ENCODE measurements at regions of chr5 and their contacts with region 1.

Region 1: DNA sequence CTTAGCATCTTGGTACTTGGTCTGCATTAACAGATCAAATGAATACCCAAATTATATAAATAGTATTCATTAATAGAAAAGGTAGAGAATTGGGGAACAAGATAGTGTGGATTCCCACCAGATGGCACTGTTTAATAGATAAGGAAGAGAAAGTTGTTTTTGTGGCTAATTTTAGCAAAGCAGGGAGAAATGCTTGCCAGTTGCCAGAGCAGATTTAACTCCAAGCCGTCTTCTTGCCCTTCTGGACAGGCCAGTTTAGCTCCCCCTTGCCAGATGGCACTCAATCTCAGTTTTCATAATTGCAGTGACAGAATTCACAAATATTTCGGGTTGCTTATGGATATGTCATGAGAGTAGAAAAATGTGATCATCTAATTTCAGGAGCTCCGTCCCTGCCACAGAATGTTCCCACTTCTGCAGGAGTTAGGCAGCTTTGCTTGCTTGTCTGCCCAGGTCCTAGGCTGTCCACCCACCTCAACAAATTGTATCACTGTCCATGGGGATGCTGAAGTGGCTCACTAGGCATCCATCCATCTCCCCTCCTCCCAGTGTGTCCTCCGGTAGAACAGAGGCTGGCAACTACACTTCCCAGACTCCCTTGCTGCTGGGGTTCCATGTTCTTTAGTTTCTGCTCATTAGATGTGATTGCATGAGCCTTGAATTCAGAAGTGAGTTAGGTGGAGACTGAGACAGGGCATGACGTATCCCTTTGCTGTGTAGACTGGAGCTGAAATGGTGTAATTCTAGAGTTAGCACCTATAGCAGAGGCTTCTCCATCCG is 11.8 kb upstream of the HEXB start:
- DNase-seq: no peak
- ATAC-seq: no peak
- H3K4me3 Mint-ChIP-seq: no peak overlapping the region
- H3K27ac Mint-ChIP-seq: no peak overlapping the region
- H3K4me1 Mint-ChIP-seq: no peaks in the 10 kb centered on the region
- H3K27me3 Mint-ChIP-seq: peaks cover 6% of the 10 kb centered on the region
- CTCF ChIP-seq: no peak

Region 2: DNA sequence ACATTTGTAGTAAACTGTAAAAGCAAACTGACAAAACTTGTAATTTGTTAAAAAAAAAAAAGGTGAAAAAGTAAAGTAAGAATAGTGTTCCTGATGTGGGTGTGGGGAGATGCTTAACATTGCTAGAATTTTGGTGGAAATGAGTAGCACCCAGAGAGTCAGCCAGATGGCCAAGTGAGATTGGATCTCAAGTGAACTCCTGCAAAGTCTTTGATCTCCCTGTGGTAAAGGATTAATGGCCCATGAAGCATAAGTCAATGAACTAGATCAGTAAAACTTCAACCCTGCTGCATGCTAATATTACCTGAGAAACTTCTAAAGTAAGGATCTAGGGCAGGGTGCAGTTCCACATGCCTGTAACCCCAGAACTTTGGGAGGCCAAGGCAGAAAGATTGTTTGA is 212.0 kb after region 1 on chr5:
- CTCF ChIA-PET with region 1: no interaction called
- POLR2A ChIA-PET with region 1: no interaction called
- intact Hi-C with region 1: no loop called
- DNase-seq: no peak
- ATAC-seq: no peak
- H3K4me3 Mint-ChIP-seq: no peak overlapping the region
- H3K27ac Mint-ChIP-seq: no peak overlapping the region
- H3K4me1 Mint-ChIP-seq: no peaks in the 10 kb centered on the region
- H3K27me3 Mint-ChIP-seq: no peaks in the 10 kb centered on the region
- CTCF ChIP-seq: no peak

Region 3: DNA sequence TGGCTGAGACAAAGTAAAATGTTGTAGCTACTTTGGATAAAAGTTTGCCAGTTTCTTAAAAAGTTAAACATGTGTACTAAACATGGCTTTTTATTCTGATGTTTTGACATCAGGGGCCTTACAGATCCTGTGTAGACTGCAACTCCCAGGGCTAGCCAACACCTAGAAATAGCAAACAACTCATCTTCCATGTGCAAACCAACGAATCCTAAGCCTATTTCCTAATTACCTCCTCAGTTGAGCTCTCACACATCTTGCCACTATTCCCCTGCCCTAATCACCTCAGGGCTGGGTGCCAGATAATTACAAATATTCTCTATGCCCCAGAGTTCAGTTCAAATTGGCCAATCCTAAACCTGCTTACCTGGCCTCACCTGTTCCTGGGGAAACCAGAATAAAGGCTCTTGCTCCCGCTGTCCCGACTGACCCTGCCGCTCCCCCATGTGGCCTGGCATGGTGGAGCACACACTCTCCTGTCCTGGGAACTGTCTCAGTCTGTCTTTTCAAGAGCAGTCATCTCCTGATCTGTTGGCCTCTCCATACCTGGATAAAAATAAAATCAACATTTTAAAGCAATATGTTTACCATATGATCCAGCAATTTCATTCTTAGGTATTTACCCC is 230.1 kb after region 1 on chr5:
- CTCF ChIA-PET with region 1: no interaction called
- POLR2A ChIA-PET with region 1: no interaction called
- intact Hi-C with region 1: loop called (anchors 1 kb)
- DNase-seq: no peak
- ATAC-seq: peak; percentile 52
- H3K4me3 Mint-ChIP-seq: no peak overlapping the region
- H3K27ac Mint-ChIP-seq: no peak overlapping the region
- H3K4me1 Mint-ChIP-seq: no peaks in the 10 kb centered on the region
- H3K27me3 Mint-ChIP-seq: no peaks in the 10 kb centered on the region
- CTCF ChIP-seq: no peak

Region 4: DNA sequence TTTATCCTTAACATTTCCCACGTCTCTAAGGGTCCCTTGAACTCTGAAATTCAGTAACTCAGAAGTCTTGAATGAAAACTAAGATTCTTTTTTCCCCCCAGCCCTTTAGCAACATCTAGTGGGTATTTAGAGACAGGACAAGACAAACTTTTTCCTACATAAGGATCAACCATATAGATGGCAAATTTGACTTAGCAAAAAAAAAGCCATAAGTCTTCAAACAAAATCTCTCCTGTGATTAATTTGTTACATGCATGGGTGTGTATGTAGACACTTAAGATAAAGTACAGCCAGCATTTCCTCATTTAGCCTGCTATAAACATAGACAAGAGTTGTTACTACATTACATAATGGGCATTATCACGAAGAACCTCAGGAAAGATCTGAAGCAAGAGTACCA is 592.5 kb after region 1 on chr5:
- CTCF ChIA-PET with region 1: no interaction called
- POLR2A ChIA-PET with region 1: no interaction called
- intact Hi-C with region 1: loop called (anchors 5 kb)
- DNase-seq: no peak
- ATAC-seq: no peak
- H3K4me3 Mint-ChIP-seq: no peak overlapping the region
- H3K27ac Mint-ChIP-seq: no peak overlapping the region
- H3K4me1 Mint-ChIP-seq: no peaks in the 10 kb centered on the region
- H3K27me3 Mint-ChIP-seq: peaks cover 17% of the 10 kb centered on the region
- CTCF ChIP-seq: no peak

Measured in activated B cell treated with CpG ODN at 0.5 μM for 24 hours (primary cell).